ENCODE measurements at regions of chr12 and their contacts with region 1.

Region 1: GRCh38 chr12:58443273-58443980 is 476.9 kb downstream of the LRIG3 start:
- DNase-seq: no peak
- ATAC-seq: no peak

Region 2: GRCh38 chr12:57983146-57983857 is 460.1 kb before region 1 on chr12:
- intact Hi-C with region 1: loop called (anchors 10 kb)
- DNase-seq: no peak
- ATAC-seq: no peak

Region 3: DNA sequence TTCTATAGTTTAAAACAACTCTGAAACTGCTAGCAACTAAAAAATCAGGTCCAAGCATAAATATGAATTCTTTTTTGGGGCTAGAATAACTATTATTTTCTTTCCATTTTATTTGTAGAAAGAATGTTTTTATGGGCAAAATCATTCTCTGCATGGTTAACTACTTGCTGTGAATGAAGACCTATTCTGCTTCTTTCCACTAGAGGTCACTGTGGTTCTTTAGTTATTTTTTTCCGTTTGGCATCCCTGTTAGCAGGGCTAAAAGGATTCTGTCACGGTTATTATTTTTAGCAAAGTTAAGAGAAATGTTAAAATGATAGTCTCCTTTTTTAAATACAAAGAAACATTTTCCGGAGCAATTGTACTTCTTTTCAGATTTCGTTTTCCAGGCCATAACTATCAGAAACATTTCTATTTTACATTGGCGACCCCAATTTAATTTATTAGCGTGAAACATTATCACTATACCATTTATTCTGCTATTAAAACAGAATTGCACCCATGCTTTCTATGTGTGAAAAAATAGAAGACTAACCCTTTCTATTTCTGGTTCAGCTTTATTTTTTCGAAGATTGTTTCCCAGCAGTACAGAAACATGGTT is 97.3 kb before region 1 on chr12:
- intact Hi-C with region 1: loop called (anchors 5 kb)
- DNase-seq: no peak
- ATAC-seq: peak; percentile 72